Caco-2 (cell line): ENCODE measurements at regions of chr11 and their contacts with region 1.

Region 1: DNA sequence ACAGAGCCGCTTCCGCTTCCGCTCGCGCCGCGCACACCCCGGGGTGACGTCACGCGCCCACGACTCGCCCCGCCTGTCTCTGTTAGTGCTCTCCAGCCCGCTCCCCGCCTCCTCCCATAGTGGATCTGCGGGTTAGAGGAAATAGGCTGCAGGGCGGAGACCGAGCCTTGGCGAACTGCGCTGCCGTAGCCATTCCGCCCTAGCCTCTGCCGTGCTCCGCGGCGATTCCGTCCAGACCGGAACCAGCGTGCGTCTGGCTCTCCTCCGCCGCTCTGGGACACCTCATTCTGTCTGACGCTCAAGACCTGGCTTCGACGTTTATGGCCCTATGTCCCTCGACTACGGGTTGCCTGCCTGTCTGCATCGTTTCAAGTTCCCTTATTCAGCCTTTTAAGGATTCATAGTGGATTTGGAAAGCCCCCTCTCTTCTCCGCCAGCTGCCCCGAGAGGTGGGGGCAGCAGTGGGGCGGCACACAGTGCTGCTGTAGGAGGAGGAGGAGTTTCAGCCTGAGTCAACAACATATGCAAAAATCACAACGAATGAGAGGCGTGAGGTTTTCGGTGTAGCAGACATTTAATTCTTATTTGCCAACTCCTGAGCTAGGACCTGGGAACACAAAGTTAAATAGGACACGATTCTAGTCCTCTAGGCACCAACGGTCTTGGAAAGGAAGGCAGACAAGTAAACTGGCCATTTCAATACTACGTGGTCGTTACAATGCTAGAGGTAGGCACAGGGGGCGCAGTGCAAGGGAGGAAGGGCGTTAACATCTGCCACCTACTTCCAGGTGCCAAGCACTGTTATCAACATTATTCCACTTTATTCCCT is at the start of gene TAF10:
- DNase-seq: peak; percentile 97
- H3K4me3 ChIP-seq: peak within 1 kb of the TSS; percentile 78
- H3K4me3 Mint-ChIP-seq: no peak within 1 kb of the TSS
- H3K27ac Mint-ChIP-seq: no peak within 1 kb of the TSS
- H3K4me1 ChIP-seq: peaks cover 17% of the 10 kb centered on the region
- H3K4me1 Mint-ChIP-seq: peaks cover 4% of the 10 kb centered on the region
- H3K27me3 ChIP-seq: no peaks in the 10 kb centered on the region
- H3K27me3 Mint-ChIP-seq: no peaks in the 10 kb centered on the region
- CTCF ChIP-seq: peak; percentile 39 to 57
- total RNA-seq, gene TAF10: 142 and 143 TPM in 2 replicates

Region 2: GRCh38 chr11:6234387-6235107 is 377.9 kb before region 1 on chr11 and contains the start of gene FHIP1B:
- CTCF ChIA-PET with region 1: no interaction called
- POLR2A ChIA-PET with region 1: no interaction called
- intact Hi-C with region 1: loop called (anchors 10 kb)
- DNase-seq: peak; percentile 100
- H3K4me3 ChIP-seq: peak within 1 kb of the TSS; percentile 89
- H3K4me3 Mint-ChIP-seq: peak within 1 kb of the TSS; percentile 87
- H3K27ac Mint-ChIP-seq: peak within 1 kb of the TSS; percentile 90
- H3K4me1 ChIP-seq: peaks cover 19% of the 10 kb centered on the region
- H3K4me1 Mint-ChIP-seq: peaks cover 19% of the 10 kb centered on the region
- H3K27me3 ChIP-seq: no peaks in the 10 kb centered on the region
- H3K27me3 Mint-ChIP-seq: no peaks in the 10 kb centered on the region
- CTCF ChIP-seq: no peak
- total RNA-seq, gene FHIP1B: 26.8 and 27.8 TPM in 2 replicates

Region 3: DNA sequence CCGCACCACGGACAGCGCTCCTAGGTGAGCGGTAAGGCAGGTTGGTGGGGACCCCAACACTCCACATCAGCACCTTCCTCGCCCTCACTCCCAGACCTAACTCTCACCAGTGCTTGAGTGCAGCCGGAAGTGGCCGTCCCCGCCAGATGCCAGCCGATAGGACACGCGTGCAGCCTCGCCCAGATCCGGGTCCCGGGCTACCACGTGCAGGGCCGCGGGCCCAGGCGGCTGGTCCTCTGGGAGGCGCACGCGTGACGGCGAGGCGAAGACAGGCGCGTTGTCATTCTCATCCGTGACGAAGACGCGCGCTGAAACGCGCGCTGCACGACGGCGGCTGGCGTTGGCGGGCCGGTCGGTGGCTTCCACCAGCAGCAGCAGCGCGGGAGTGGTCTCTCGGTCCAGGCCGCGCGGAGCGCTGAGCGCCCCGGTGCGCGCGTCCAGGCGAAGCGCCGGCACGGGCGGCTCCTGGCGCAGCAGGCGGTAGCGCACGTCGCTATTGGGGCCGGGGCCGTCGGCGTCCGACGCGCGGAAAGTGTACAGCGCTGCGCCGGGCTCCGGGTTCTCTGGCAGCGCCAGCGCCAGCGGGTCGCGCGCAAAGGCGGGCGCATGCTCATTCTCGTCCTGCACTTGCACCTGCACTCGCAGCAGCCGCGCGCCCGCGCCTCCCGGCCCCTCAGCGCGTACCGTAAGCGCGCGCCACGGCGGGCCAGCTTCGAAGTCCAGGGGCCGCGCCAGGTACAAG is 17.6 kb after region 1 on chr11:
- CTCF ChIA-PET with region 1: no interaction called
- POLR2A ChIA-PET with region 1: no interaction called
- intact Hi-C with region 1: loop called (anchors 1 kb)
- DNase-seq: peak; percentile 58 to 72
- H3K4me3 ChIP-seq: peak overlapping the region; percentile 62
- H3K4me3 Mint-ChIP-seq: peak overlapping the region; percentile 72
- H3K27ac Mint-ChIP-seq: no peak overlapping the region
- H3K4me1 ChIP-seq: peaks cover 3% of the 10 kb centered on the region; the same call in 1 of the 2 replicates
- H3K4me1 Mint-ChIP-seq: no peaks in the 10 kb centered on the region
- H3K27me3 ChIP-seq: no peaks in the 10 kb centered on the region; the same call in 1 of the 2 replicates
- H3K27me3 Mint-ChIP-seq: no peaks in the 10 kb centered on the region
- CTCF ChIP-seq: no peak

Region 4: DNA sequence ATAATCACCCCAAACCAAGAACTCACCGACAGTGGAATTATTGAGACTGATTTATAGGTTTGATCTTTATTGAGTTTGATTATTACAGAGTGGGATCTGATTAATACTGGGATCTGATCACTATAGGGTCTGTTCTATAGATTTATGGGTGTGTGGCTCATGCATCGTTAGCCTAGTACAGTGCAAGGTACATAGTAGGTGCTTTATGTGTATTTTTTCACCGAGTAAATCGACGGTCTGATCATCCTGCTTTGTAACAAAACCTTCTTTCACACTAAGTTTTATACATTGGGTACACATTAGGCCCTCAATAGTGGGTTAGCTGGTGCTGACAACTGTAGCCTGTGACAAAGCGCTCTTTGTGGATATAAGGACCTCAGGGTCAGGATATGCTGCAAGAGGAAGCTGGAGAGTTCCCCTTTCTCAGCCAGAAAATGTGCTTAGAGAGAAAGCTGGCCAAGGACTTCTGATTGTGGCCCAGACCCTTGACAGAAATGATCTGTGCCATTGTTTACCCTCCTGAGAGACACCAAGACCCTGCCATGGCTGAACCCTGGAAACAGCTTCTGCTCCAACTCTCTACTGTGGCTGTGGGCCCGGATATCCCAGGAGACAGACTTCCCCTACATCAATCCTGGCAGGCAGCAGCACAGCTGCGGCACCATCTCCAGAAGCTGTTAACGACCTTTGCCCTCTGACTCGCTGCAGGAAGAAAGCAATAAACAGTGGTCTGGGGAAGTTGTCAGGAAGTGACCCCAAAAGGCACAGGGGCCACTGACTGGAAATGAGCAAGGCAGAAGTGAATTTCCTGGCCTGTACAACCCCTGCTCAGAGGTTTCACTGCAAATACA is 22.9 kb after region 1 on chr11:
- CTCF ChIA-PET with region 1: no interaction called
- POLR2A ChIA-PET with region 1: interaction called, 3 read pairs
- intact Hi-C with region 1: loop called (anchors 1 kb)
- DNase-seq: peak; percentile 22 to 67
- H3K4me3 ChIP-seq: no peak overlapping the region
- H3K4me3 Mint-ChIP-seq: no peak overlapping the region
- H3K27ac Mint-ChIP-seq: no peak overlapping the region
- H3K4me1 ChIP-seq: peaks cover 16% of the 10 kb centered on the region
- H3K4me1 Mint-ChIP-seq: no peaks in the 10 kb centered on the region
- H3K27me3 ChIP-seq: no peaks in the 10 kb centered on the region; the same call in 1 of the 2 replicates
- H3K27me3 Mint-ChIP-seq: no peaks in the 10 kb centered on the region
- CTCF ChIP-seq: no peak

Region 5: GRCh38 chr11:6667733-6668374 is 55.4 kb after region 1 on chr11:
- CTCF ChIA-PET with region 1: interaction called, 3 read pairs
- POLR2A ChIA-PET with region 1: no interaction called
- intact Hi-C with region 1: loop called (anchors 1 kb)
- DNase-seq: peak in 1 of 2 experiments; percentile 45
- H3K4me3 ChIP-seq: no peak overlapping the region
- H3K4me3 Mint-ChIP-seq: no peak overlapping the region
- H3K27ac Mint-ChIP-seq: no peak overlapping the region
- H3K4me1 ChIP-seq: no peaks in the 10 kb centered on the region
- H3K4me1 Mint-ChIP-seq: no peaks in the 10 kb centered on the region
- H3K27me3 ChIP-seq: no peaks in the 10 kb centered on the region
- H3K27me3 Mint-ChIP-seq: peaks cover 15% of the 10 kb centered on the region
- CTCF ChIP-seq: peak; percentile 62 to 64

Region 6: DNA sequence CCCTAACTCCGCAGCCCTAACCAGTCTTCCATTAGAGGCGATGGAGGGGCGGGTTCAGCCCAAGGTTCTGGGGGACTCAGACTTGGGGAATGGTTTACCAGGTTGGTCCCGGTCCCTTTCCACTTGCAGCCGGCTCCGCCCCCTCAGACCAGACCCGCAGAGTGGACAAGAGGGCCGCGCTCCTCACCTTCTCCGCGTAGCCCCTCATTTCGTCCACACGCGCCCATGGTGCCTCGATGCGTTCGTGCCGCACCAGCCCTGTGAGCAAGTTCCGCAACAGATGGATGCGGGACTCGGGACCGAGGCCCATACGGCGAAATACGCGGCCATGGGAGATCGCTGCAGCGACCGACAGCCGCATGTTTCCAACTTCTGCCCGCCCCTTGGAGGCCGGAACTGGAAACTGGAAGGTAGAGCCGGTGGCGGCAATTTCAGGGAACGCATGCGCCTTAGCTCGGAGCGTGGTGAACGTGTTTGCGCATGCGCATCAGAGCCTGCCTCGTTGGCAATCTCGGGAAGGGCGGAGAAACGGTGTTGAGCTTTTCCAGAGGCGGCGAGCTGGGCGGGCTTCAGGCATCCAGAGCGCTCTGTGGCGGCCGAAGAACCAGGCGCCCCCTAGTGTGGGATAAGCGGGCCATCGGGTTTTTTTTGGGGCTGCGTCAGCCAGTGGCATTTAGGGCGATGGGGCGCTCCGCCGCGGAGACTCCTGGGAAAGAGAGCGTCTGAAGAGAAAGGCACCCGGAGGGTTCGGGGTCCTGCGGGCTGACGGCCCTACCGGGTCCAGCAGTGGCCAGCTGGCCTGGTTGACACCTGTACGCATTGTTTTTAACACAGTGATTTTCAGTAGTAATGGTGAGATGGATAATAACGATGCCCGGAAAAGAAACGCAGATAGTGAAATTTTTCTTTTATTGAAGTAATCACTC is 70.8 kb after region 1 on chr11 and contains the start of gene MRPL17:
- CTCF ChIA-PET with region 1: interaction called, 12 read pairs
- POLR2A ChIA-PET with region 1: interaction called, 9 read pairs
- intact Hi-C with region 1: loop called (anchors 1 kb)
- DNase-seq: peak; percentile 99
- H3K4me3 ChIP-seq: peak within 1 kb of the TSS; percentile 88
- H3K4me3 Mint-ChIP-seq: peak within 1 kb of the TSS; percentile 100
- H3K27ac Mint-ChIP-seq: peak within 1 kb of the TSS; percentile 100
- H3K4me1 ChIP-seq: peaks cover 13% of the 10 kb centered on the region
- H3K4me1 Mint-ChIP-seq: peaks cover 7% of the 10 kb centered on the region
- H3K27me3 ChIP-seq: no peaks in the 10 kb centered on the region
- H3K27me3 Mint-ChIP-seq: peaks cover 5% of the 10 kb centered on the region
- CTCF ChIP-seq: peak; percentile 89 to 91
- total RNA-seq, gene MRPL17: 57.8 and 60.8 TPM in 2 replicates